BJ (cell line): ENCODE measurements at regions of chr3 and their contacts with region 1.

Region 1: DNA sequence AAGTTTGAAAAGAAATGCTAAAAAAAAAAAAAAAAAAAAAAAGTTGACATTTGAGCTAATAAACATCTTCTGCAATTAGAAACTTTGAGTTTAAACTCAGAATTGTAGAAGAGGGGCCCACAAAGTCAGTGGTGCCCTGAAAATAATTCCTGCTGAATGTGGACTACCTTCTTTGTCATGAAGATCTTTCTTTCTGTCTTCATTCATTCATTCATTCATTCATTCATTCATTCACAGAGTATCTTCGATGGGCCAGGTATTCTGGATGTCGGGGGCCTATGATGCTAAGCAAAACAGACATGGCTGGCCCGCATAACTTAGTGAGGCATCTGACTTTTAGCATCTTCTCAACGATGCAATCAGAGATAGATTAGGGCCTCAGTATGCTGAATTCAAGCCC is 24.6 kb downstream of the ETV5 start:
- DNase-seq: no peak
- H3K4me3 ChIP-seq: no peak overlapping the region
- H3K27me3 ChIP-seq: no peaks in the 10 kb centered on the region
- CTCF ChIP-seq: no peak

Region 2: GRCh38 chr3:186025161-186025560 is 59.1 kb before region 1 on chr3:
- CTCF ChIA-PET with region 1: no interaction called
- POLR2A ChIA-PET with region 1: no interaction called
- DNase-seq: no peak
- H3K4me3 ChIP-seq: no peak overlapping the region
- H3K27me3 ChIP-seq: peaks cover 8% of the 10 kb centered on the region
- CTCF ChIP-seq: no peak

Region 3: DNA sequence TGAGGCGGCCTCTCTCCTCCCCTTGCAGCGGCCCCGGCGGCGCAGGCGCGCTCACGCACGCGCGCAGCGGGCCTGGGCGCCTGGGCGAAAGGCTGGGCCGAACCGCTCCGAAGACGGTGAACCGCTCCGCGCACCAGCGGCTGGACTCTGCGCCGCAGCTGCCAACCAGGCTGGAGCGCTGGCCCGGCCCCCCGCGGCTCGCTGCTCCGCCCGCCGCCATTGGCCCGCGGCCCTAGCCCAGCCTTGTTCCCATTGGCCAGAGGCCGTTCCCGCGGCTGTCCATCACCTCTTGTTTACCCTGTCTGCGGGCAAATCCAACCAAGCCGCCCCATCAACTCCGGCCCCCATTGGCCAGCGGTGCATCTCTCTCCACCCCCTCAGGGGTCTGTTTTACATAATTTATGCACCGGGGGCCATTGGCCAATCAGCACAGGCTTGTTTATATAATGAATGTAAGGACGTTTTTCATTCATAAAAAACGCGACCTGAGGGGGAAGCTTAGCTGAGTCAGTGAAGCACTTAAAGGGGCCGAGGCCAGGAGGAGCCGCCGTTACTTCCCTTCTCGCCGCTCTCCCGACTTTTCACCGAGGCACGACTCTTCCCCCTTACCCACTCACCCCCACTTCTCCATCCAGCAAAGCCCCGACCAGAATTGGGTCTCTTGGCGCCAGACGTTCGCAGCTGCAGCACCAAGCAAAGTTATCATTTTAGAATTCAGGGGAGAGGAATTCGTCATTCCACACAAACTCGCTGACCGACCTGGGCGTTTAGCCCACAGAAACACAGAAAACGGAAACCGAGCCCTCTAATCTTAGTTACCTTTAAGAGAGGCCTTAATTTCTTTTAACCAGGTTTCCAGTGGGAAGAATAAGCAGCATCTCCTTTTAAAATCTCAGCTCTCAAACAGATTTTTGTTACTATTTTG is 24.9 kb after region 1 on chr3 and contains the start of gene ETV5:
- CTCF ChIA-PET with region 1: no interaction called
- POLR2A ChIA-PET with region 1: interaction called, 12 read pairs
- DNase-seq: peak; percentile 99
- H3K4me3 ChIP-seq: peak within 1 kb of the TSS; percentile 96
- H3K27me3 ChIP-seq: peaks cover 8% of the 10 kb centered on the region
- CTCF ChIP-seq: no peak
- polyA plus RNA-seq, gene ETV5: 24.1 and 27.7 TPM in 2 replicates